ENCODE measurements at regions of chr2 and their contacts with region 1.

Region 1: GRCh38 chr2:110116033-110116710 is 550 bp upstream of the MALL start:
- DNase-seq: peak in 1 of 2 donors; percentile 79
- H3K4me3 ChIP-seq: peak overlapping the region; percentile 23 to 65
- H3K27ac ChIP-seq: peak overlapping the region; percentile 31
- H3K4me1 ChIP-seq: peaks cover under 1 to 7% of the 10 kb centered on the region in 2 donors
- H3K27me3 ChIP-seq: no peaks in the 10 kb centered on the region
- CTCF ChIP-seq: peak; percentile 53 to 72 (median 59)

Region 2: GRCh38 chr2:108776475-108776874 is 1339.7 kb before region 1 on chr2:
- intact Hi-C with region 1: no loop called
- DNase-seq: no peak
- H3K4me3 ChIP-seq: no peak overlapping the region
- H3K27ac ChIP-seq: no peak overlapping the region
- H3K4me1 ChIP-seq: no peaks in the 10 kb centered on the region
- H3K27me3 ChIP-seq: no peaks in the 10 kb centered on the region
- CTCF ChIP-seq: no peak

Region 3: GRCh38 chr2:110134025-110134424 is 17.9 kb after region 1 on chr2:
- intact Hi-C with region 1: no loop called
- DNase-seq: no peak
- H3K4me3 ChIP-seq: no peak overlapping the region
- H3K27ac ChIP-seq: no peak overlapping the region
- H3K4me1 ChIP-seq: no peaks in the 10 kb centered on the region
- H3K27me3 ChIP-seq: no peaks in the 10 kb centered on the region
- CTCF ChIP-seq: no peak

Region 4: DNA sequence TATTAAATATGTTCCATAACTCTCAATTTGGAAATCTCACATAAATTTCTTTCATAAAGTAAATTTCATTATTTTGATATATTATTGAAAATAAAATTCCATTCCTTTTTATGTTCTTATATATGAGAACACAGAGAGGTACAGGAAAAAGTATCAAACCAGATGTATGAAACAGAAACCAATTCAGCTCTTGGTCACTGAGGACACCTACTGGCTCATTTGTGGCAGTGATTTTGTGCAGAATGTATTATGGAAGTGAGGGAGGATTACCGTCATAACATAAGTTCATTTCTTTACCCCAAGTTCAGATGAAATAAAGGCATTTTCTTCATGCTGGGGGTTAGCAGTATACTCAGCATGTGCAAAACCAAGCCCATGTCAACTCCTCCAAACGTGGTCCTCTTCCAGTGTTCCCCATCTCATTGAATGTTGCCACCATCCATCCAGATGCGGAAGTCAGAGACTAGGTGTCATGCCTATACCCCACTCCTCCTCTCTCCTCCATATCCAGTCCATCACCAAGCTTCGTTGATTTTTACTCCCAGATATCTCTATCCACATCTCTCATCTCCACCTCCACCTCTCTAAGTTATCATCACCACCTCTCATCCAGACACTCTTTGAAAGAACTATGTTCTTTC is 41.1 kb after region 1 on chr2:
- intact Hi-C with region 1: loop called (anchors 2 kb)
- DNase-seq: no peak
- H3K4me3 ChIP-seq: no peak overlapping the region
- H3K27ac ChIP-seq: peak overlapping the region in 1 of 2 donors; percentile 9
- H3K4me1 ChIP-seq: peaks cover 0 to 4% of the 10 kb centered on the region in 2 donors
- H3K27me3 ChIP-seq: no peaks in the 10 kb centered on the region
- CTCF ChIP-seq: peak; percentile 73 to 92 (median 80)

Region 5: GRCh38 chr2:111155610-111156009 is 1039.4 kb after region 1 on chr2:
- intact Hi-C with region 1: no loop called
- DNase-seq: no peak
- H3K4me3 ChIP-seq: no peak overlapping the region
- H3K27ac ChIP-seq: no peak overlapping the region
- H3K4me1 ChIP-seq: peaks cover 0 to 4% of the 10 kb centered on the region in 2 donors
- H3K27me3 ChIP-seq: no peaks in the 10 kb centered on the region
- CTCF ChIP-seq: no peak

Measured in ascending aorta (tissue), 2 donors.